Activated B cell treated with CpG ODN at 0.5 μM for 24 hours (primary cell): ENCODE measurements at regions of chr12 and their contacts with region 1.

Region 1: GRCh38 chr12:53005986-53006809 is at the start of gene EIF4B:
- DNase-seq: peak; percentile 97
- ATAC-seq: peak; percentile 90
- H3K4me3 Mint-ChIP-seq: peak within 1 kb of the TSS; percentile 98
- H3K27ac Mint-ChIP-seq: peak within 1 kb of the TSS; percentile 98
- H3K4me1 Mint-ChIP-seq: peaks cover 51% of the 10 kb centered on the region
- H3K27me3 Mint-ChIP-seq: peaks cover 1% of the 10 kb centered on the region
- CTCF ChIP-seq: no peak
- total RNA-seq, gene EIF4B: 726 and 733 TPM in 2 replicates

Region 2: DNA sequence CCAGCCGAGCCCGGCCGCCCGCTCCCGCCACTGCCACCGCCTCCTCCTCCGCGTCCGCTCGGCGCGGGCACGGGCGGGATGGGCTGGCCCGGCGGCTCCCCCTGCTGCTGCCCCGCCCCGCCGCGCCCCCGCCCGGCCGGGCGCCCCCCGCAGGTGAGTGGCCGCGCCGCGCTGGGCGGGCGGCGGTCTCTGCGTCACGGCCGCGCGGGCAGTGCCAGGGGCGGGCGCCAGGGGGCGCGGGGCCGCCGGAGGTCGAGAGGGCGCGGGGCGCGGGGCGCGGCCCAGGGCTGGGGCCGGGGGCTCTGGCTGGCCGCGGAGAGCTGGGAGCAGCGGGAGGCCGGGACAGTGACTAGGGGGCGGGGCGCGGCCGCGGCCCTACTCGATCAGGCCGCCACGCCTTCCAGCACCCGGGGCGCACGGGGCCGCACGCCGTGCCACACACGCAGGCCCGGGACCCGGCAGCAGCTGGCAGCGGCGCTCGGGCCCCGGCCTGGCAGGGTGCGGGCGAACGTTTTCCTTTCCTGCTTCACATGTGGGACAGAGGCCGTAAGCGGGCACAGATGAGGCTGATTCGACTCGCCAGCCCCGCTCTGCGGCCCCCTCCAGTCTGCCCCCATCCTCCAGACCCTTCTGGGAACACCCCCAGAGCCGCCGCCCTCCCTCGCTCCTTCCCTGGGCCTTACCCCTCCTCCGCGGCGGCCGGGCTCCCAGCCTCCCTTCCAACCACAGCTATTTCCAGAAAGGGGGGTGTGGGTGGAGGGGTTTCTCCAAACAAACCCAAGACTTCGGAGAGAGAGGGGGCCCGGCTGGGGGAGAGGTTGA is 41.2 kb after region 1 on chr12:
- CTCF ChIA-PET with region 1: no interaction called
- POLR2A ChIA-PET with region 1: interaction called, 19 read pairs
- intact Hi-C with region 1: loop called (anchors 2 kb)
- DNase-seq: peak; percentile 80
- ATAC-seq: peak; percentile 86
- H3K4me3 Mint-ChIP-seq: peak overlapping the region; percentile 64
- H3K27ac Mint-ChIP-seq: peak overlapping the region; percentile 24
- H3K4me1 Mint-ChIP-seq: peaks cover 10% of the 10 kb centered on the region
- H3K27me3 Mint-ChIP-seq: no peaks in the 10 kb centered on the region
- CTCF ChIP-seq: no peak

Region 3: DNA sequence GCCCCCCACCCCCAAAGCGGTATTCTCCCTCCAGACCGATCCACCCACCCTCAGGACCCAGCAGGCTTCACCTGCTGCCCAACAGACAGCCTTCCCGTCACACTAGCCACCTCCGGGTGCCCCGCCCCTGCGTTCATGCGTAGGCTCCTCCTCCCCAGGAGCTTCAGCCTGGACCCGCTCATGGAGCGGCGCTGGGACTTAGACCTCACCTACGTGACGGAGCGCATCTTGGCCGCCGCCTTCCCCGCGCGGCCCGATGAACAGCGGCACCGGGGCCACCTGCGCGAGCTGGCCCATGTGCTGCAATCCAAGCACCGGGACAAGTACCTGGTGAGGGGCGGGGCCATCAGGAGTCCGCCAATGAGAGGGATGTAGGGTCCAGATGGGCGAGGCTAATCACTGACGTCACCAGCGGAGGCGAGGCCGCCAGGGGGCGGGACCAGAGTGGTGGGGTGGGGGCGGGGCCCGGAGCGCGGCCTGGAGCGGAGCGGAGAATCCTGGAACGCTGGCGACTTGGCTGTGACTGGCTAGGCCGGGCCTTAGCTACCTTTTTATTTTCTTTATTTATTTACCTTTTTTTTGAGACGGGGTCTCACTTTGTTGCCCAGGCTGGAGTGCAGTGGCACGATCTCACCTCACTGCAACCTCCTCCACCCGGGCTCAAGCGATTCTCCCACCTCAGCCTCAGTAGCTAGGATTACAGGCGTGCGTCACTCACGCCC is 48.1 kb after region 1 on chr12:
- CTCF ChIA-PET with region 1: no interaction called
- POLR2A ChIA-PET with region 1: interaction called, 10 read pairs
- intact Hi-C with region 1: no loop called
- DNase-seq: peak; percentile 86
- ATAC-seq: peak; percentile 97
- H3K4me3 Mint-ChIP-seq: peak overlapping the region; percentile 95
- H3K27ac Mint-ChIP-seq: peak overlapping the region; percentile 90
- H3K4me1 Mint-ChIP-seq: peaks cover 12% of the 10 kb centered on the region
- H3K27me3 Mint-ChIP-seq: peaks cover 6% of the 10 kb centered on the region
- CTCF ChIP-seq: no peak

Region 4: DNA sequence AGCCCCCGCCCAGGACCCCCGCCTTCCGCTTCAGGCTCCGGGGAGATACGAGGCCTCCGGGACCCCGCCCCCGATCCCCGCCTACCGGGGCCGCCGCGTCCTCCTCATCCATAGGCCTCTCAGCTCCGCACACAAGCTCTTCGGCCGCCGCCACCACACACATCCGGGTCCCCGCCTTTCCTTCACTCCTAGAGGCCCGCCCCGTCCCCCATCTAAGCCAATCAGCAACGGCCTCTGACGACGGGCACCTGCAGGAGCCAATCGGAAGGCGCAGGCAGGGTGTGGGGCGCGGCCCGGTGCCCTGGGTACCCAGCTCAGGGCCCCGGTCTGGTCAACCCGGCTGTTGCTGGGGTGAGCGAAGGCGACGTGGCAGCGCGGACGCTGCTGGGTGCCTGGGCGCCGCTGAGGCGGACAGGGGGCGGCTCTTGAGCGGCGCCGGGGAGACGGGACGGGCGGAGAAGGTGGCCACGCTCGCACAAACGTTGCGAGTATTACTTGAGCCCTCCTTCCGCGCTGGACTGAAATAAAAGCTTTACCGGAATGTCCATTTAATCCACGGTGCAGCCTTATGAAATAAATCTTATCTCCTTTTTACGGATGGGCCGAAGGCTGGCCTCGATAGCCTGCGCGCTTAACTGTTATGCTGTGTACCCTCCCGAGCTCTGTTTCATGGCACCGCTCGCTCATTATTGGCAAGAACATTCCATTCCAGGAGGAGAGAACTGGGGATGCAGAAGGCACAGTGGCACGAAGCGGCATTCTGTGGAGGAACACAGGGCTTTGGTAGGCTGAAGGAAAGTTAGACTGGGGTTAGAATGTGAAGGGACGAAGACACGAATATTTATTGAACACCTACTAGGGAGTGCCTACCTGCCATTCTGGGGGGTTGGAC is 73.3 kb after region 1 on chr12 and contains the start of gene SPRYD3:
- CTCF ChIA-PET with region 1: no interaction called
- POLR2A ChIA-PET with region 1: interaction called, 11 read pairs
- intact Hi-C with region 1: loop called (anchors 2 kb)
- DNase-seq: peak; percentile 98
- ATAC-seq: peak; percentile 98
- H3K4me3 Mint-ChIP-seq: peak within 1 kb of the TSS; percentile 92
- H3K27ac Mint-ChIP-seq: peak within 1 kb of the TSS; percentile 87
- H3K4me1 Mint-ChIP-seq: peaks cover 31% of the 10 kb centered on the region
- H3K27me3 Mint-ChIP-seq: no peaks in the 10 kb centered on the region
- CTCF ChIP-seq: no peak
- total RNA-seq, gene SPRYD3: 32.5 and 33.9 TPM in 2 replicates

Region 5: DNA sequence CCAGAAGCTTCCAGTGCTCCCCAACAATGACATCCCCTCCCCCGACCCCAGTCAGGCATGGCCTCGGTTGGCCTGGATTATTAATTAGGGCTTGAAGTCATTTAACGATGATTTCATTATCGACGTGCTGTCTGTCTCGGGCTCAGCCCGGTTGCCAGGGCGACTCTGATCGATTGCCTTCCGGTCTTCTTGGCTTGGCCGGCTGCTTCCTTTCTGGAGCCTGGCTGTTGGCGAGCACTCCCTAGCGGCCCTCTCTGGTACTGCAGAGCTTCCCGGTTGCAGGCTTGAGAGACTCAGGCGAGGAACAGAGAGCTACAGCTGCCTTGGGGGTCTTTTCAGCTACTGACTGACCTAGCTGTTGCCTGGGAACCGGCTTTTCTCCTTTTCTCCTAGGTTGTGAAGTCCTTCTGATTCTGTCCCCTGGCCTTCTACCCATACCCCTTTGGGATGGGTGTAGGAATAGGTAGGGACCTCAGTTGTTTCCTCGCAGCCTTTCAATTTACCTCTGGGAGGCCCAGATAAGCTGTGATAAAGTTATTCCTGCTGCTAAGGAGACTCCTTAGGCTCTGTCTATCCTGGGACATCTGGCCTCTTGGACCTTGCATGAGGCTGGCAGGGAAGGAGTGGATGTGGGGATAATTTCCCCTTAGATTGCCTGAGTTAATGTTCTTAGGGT is 751.0 kb after region 1 on chr12:
- CTCF ChIA-PET with region 1: no interaction called
- POLR2A ChIA-PET with region 1: no interaction called
- intact Hi-C with region 1: no loop called
- DNase-seq: peak; percentile 75
- ATAC-seq: peak; percentile 75
- H3K4me3 Mint-ChIP-seq: peak overlapping the region; percentile 48
- H3K27ac Mint-ChIP-seq: peak overlapping the region; percentile 8
- H3K4me1 Mint-ChIP-seq: peaks cover 22% of the 10 kb centered on the region
- H3K27me3 Mint-ChIP-seq: peaks cover 29% of the 10 kb centered on the region
- CTCF ChIP-seq: no peak

Region 6: GRCh38 chr12:54191550-54192022 is 1185.4 kb after region 1 on chr12:
- CTCF ChIA-PET with region 1: no interaction called
- POLR2A ChIA-PET with region 1: no interaction called
- intact Hi-C with region 1: no loop called
- DNase-seq: peak; percentile 58
- ATAC-seq: peak; percentile 61
- H3K4me3 Mint-ChIP-seq: no peak overlapping the region
- H3K27ac Mint-ChIP-seq: no peak overlapping the region
- H3K4me1 Mint-ChIP-seq: peaks cover 29% of the 10 kb centered on the region
- H3K27me3 Mint-ChIP-seq: peaks cover 20% of the 10 kb centered on the region
- CTCF ChIP-seq: no peak